HepG2 (cell line): ENCODE measurements at regions of chr7 and their contacts with region 1.

Region 1: GRCh38 chr7:35985126-35985754 is 167.8 kb upstream of the EEPD1 start:
- DNase-seq: peak; percentile 52
- ATAC-seq: peak; percentile 99
- H3K4me3 ChIP-seq: no peak overlapping the region
- H3K27ac ChIP-seq: no peak overlapping the region
- H3K4me1 ChIP-seq: peaks cover 14% of the 10 kb centered on the region; the same call in 1 of the 2 replicates
- H3K27me3 ChIP-seq: peaks cover 0 to 10% of the 10 kb centered on the region in 2 experiments; a peak in 2 of 5 replicates
- CTCF ChIP-seq: peak; percentile 95
- EP300 ChIP-seq: no peak
- POLR2A ChIP-seq: no peak
- RAD21 ChIP-seq: peak; percentile 95

Region 2: DNA sequence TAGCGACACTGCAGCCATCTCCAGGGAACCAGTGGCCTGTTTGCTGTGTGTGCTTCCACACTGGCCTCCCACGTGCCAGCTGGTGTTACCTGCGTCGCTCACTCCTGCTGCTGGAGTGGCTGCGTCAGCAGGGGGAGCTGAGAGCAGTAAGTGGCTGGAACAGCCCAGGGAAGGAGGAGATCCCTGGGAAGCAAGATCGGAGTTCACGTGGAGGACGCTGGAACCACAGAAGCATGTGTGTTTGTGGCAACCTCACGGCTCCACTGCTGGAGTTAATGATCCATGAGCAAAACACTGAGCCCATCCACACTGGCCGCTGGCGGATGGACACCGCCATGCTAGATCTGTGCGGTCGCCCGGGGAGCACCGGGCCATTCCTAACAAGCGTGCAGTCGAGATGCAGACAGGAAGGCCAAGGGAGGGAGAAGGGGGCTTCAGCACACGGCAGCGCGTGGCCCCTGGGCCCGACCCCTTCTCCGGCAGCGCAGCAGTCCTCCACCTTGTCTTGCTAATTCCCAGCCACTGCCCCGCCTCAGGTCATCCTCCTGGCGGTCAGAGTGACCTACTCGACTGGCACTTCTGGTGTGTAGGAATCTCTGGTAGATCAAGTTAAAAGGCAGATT is 99.3 kb after region 1 on chr7:
- CTCF ChIA-PET with region 1: interaction called, 4 read pairs
- POLR2A ChIA-PET with region 1: no interaction called
- in situ Hi-C with region 1: no loop called
- intact Hi-C with region 1: loop called (anchors 10 kb)
- DNase-seq: peak; percentile 65
- ATAC-seq: peak; percentile 93
- H3K4me3 ChIP-seq: no peak overlapping the region
- H3K27ac ChIP-seq: no peak overlapping the region
- H3K4me1 ChIP-seq: peaks cover 20% of the 10 kb centered on the region
- H3K27me3 ChIP-seq: peaks cover 0 to 14% of the 10 kb centered on the region in 2 experiments; a peak in 1 of 5 replicates
- CTCF ChIP-seq: peak; percentile 94
- EP300 ChIP-seq: peak in 1 of 2 experiments; percentile 54; a peak in 1 of 4 replicates
- POLR2A ChIP-seq: no peak
- RAD21 ChIP-seq: peak; percentile 74

Region 3: GRCh38 chr7:36315309-36316133 is 330.3 kb after region 1 on chr7:
- CTCF ChIA-PET with region 1: interaction called, 24 read pairs
- POLR2A ChIA-PET with region 1: no interaction called
- in situ Hi-C with region 1: loop called (anchors 5 kb)
- intact Hi-C with region 1: loop called (anchors 1 kb)
- DNase-seq: no peak
- ATAC-seq: no peak
- H3K4me3 ChIP-seq: peak overlapping the region in 1 of 3 experiments; percentile 10; a peak in 1 of 6 replicates
- H3K27ac ChIP-seq: no peak overlapping the region
- H3K4me1 ChIP-seq: peaks cover 47% of the 10 kb centered on the region
- H3K27me3 ChIP-seq: peaks cover 5 to 8% of the 10 kb centered on the region in 2 experiments; a peak in 2 of 5 replicates
- CTCF ChIP-seq: no peak
- EP300 ChIP-seq: no peak
- POLR2A ChIP-seq: no peak
- RAD21 ChIP-seq: no peak